GM12878 (cell line): ENCODE measurements at regions of chr3 and their contacts with region 1.

Region 1: GRCh38 chr3:11651900-11652299 is 8.2 kb upstream of the VGLL4 start:
- DNase-seq: no peak
- ATAC-seq: no peak
- H3K4me3 ChIP-seq: no peak overlapping the region
- H3K27ac ChIP-seq: no peak overlapping the region
- H3K4me1 ChIP-seq: no peaks in the 10 kb centered on the region
- H3K27me3 ChIP-seq: no peaks in the 10 kb centered on the region
- CTCF ChIP-seq: peak in 2 of 3 experiments; percentile 23 to 52; a peak in 3 of 6 replicates
- EP300 ChIP-seq: no peak
- POLR2A ChIP-seq: no peak
- RAD21 ChIP-seq: peak; percentile 66

Region 2: GRCh38 chr3:11060500-11061251 is 591.2 kb before region 1 on chr3:
- CTCF ChIA-PET with region 1: interaction called, 9 read pairs
- POLR2A ChIA-PET with region 1: no interaction called
- RAD21 ChIA-PET with region 1: interaction called, 8 read pairs
- SMC1A ChIA-PET with region 1: no interaction called
- in situ Hi-C with region 1: loop called (anchors 10 kb)
- intact Hi-C with region 1: loop called (anchors 5 kb)
- DNase-seq: no peak
- ATAC-seq: peak; percentile 91
- H3K4me3 ChIP-seq: no peak overlapping the region
- H3K27ac ChIP-seq: no peak overlapping the region
- H3K4me1 ChIP-seq: no peaks in the 10 kb centered on the region
- H3K27me3 ChIP-seq: peaks cover 0 to 3% of the 10 kb centered on the region in 2 experiments; a peak in 2 of 4 replicates
- CTCF ChIP-seq: peak; percentile 59 to 71 (median 66)
- EP300 ChIP-seq: no peak
- POLR2A ChIP-seq: no peak
- RAD21 ChIP-seq: peak; percentile 41

Region 3: DNA sequence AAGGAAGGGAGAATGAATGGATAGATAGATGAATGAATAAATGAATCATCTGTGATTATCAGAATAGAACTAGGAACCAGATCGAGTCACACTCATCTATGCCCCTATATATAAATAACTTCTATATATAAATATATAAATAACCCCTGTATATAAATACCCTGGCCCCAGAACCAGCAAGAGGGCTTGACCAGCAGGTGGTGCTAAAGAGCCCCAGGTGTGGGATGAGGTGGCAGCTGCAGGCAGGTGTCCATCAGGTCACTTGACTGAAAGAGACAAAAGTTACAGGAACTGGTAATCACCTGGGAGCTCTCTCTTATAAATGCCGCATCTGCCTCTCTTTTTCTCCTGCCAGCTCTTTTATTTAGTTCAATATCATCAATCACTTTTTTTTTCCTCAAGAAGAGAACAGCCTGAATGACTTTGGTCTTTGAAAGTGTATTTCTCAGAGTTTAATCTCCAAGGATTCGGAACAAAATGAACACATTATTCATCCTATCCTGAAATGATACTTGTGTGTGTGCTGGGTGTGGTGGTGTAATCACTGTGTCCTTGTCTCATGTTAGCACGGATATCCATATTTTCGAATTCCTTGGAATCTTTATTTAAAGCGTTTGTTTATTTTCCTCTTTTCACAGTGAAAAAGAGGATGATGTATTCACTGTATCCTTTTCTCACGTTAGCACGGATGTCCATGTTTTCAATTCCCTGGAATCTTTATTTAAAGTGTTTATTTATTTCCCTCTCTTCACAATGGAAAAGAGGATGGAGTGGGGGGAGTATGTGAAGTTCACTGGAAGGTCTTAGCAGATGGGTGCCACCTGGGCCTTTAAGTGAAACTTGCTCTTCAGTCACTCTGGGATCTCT is 415.1 kb before region 1 on chr3:
- CTCF ChIA-PET with region 1: interaction called, 19 read pairs
- POLR2A ChIA-PET with region 1: no interaction called
- RAD21 ChIA-PET with region 1: no interaction called
- SMC1A ChIA-PET with region 1: interaction called, 6 read pairs
- in situ Hi-C with region 1: loop called (anchors 5 kb)
- intact Hi-C with region 1: loop called (anchors 2 kb)
- DNase-seq: no peak
- ATAC-seq: peak; percentile 96
- H3K4me3 ChIP-seq: no peak overlapping the region
- H3K27ac ChIP-seq: no peak overlapping the region
- H3K4me1 ChIP-seq: no peaks in the 10 kb centered on the region
- H3K27me3 ChIP-seq: no peaks in the 10 kb centered on the region
- CTCF ChIP-seq: peak; percentile 60 to 85 (median 70)
- EP300 ChIP-seq: no peak
- POLR2A ChIP-seq: no peak
- RAD21 ChIP-seq: peak; percentile 87

Region 4: GRCh38 chr3:11392014-11392859 is 259.7 kb before region 1 on chr3:
- CTCF ChIA-PET with region 1: interaction called, 10 read pairs
- POLR2A ChIA-PET with region 1: no interaction called
- RAD21 ChIA-PET with region 1: interaction called, 4 read pairs
- SMC1A ChIA-PET with region 1: interaction called, 5 read pairs
- in situ Hi-C with region 1: no loop called
- intact Hi-C with region 1: no loop called
- DNase-seq: no peak
- ATAC-seq: no peak
- H3K4me3 ChIP-seq: no peak overlapping the region
- H3K27ac ChIP-seq: no peak overlapping the region
- H3K4me1 ChIP-seq: no peaks in the 10 kb centered on the region; the same call in 1 of the 2 replicates
- H3K27me3 ChIP-seq: no peaks in the 10 kb centered on the region
- CTCF ChIP-seq: no peak
- EP300 ChIP-seq: no peak
- POLR2A ChIP-seq: no peak
- RAD21 ChIP-seq: no peak

Region 5: GRCh38 chr3:11785024-11785377 is 133.1 kb after region 1 on chr3:
- CTCF ChIA-PET with region 1: no interaction called
- POLR2A ChIA-PET with region 1: no interaction called
- RAD21 ChIA-PET with region 1: no interaction called
- SMC1A ChIA-PET with region 1: no interaction called
- in situ Hi-C with region 1: no loop called
- intact Hi-C with region 1: no loop called
- DNase-seq: no peak
- ATAC-seq: peak; percentile 34
- H3K4me3 ChIP-seq: no peak overlapping the region
- H3K27ac ChIP-seq: no peak overlapping the region
- H3K4me1 ChIP-seq: peaks cover 6% of the 10 kb centered on the region
- H3K27me3 ChIP-seq: no peaks in the 10 kb centered on the region
- CTCF ChIP-seq: no peak
- EP300 ChIP-seq: no peak
- POLR2A ChIP-seq: no peak
- RAD21 ChIP-seq: no peak

Region 6: DNA sequence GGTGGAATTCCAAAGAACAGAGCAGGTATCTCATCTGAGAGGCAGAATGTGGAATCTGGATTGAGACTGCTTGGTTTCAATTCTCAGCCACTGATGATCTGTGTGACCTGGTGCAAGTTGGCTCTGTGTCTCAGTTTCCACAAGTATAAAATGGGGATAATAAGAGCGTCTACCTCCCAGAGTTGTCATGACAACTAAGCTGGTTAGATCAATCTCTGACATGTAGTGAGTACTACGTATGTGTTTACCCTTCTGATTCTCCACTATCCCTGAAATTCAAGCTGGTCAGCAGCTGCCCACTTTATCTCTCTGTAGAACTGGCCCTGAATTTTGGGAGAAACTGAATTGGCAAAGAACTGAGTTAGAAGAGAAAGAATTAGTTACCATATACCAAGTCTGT is 200.6 kb after region 1 on chr3:
- CTCF ChIA-PET with region 1: no interaction called
- POLR2A ChIA-PET with region 1: no interaction called
- RAD21 ChIA-PET with region 1: no interaction called
- SMC1A ChIA-PET with region 1: no interaction called
- in situ Hi-C with region 1: no loop called
- intact Hi-C with region 1: no loop called
- DNase-seq: no peak
- ATAC-seq: no peak
- H3K4me3 ChIP-seq: no peak overlapping the region
- H3K27ac ChIP-seq: no peak overlapping the region
- H3K4me1 ChIP-seq: no peaks in the 10 kb centered on the region
- H3K27me3 ChIP-seq: no peaks in the 10 kb centered on the region; a peak in 1 of 4 replicates
- CTCF ChIP-seq: no peak
- EP300 ChIP-seq: no peak
- POLR2A ChIP-seq: no peak
- RAD21 ChIP-seq: no peak